ENCODE measurements at regions of chr6 and their contacts with region 1.

Region 1: DNA sequence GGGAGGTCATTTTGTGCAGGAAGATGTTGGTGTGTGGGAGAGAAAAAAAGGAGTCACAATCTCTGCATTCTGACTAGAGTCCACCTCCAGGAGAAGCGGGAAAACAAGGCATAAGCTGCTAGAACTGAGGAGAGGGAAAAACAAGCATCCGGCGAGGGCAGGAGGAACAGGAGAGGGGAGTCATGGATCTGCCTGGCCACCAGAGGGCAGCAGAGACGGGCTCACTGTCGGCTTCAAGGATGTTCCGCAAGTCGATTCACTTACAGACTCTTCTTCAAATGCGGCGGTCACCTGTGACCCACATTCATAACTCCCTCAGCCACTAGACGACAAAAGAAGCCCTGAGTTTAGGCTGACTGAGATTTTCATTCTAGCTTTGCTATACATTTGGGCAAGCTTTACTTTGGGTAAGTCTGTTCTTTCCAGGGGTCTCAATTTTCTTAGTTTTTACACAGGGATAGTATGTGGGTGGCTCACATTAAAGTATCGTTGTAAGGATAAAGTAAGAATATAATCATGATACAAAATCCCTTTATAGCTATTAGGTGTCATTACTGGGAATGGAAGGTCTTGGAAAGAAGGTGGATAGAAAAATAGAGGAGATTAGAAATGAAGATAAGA is 6.6 kb upstream of the BTNL2 start:
- DNase-seq: peak; percentile 74 to 90 (median 90)
- ATAC-seq: peak; percentile 81 to 83
- H3K4me3 ChIP-seq: no peak overlapping the region
- H3K27ac ChIP-seq: no peak overlapping the region
- H3K4me1 ChIP-seq: no peaks in the 10 kb centered on the region
- H3K27me3 ChIP-seq: peaks cover 3% of the 10 kb centered on the region

Region 2: GRCh38 chr6:32244946-32245398 is 168.6 kb before region 1 on chr6:
- intact Hi-C with region 1: loop called in 1 of 4 experiments (anchors 5 kb)
- DNase-seq: peak; percentile 87 to 93 (median 93)
- ATAC-seq: peak; percentile 87 to 88
- H3K4me3 ChIP-seq: no peak overlapping the region
- H3K27ac ChIP-seq: peak overlapping the region; percentile 62
- H3K4me1 ChIP-seq: no peaks in the 10 kb centered on the region
- H3K27me3 ChIP-seq: no peaks in the 10 kb centered on the region

Region 3: DNA sequence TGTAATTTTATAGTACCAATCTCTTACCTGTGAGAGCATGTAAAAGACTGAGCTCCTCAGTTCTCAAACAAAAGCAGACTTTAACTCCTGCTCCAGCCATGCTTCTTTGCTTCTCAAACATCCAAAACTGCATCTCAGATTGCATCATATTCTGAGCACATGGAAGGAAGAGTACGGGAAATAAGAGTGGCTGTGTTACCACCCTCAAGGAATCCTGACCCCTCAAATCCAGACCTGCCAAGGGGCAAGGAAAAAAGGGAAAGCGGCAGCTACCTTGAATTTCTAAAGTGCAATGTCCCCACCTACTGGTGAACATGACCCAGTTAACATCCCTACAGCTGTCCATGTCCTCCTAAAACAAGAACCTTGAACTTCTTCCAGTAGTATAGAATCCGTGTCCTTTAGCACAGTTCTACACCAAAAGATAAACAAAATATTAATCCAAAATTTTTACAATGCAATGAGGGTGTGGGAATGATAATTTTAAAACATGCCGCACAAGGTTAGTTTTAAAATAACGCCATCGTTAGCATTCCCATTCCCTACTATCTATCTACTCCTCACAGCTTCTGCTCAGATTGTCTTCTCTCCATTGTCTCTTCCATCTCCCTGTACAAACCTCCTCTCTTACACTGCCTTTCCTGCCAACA is 287.0 kb after region 1 on chr6:
- intact Hi-C with region 1: loop called in 3 of 4 experiments (anchors 5 to 10 kb)
- DNase-seq: no peak
- ATAC-seq: peak; percentile 74 to 75
- H3K4me3 ChIP-seq: no peak overlapping the region
- H3K27ac ChIP-seq: no peak overlapping the region
- H3K4me1 ChIP-seq: no peaks in the 10 kb centered on the region
- H3K27me3 ChIP-seq: no peaks in the 10 kb centered on the region

Region 4: DNA sequence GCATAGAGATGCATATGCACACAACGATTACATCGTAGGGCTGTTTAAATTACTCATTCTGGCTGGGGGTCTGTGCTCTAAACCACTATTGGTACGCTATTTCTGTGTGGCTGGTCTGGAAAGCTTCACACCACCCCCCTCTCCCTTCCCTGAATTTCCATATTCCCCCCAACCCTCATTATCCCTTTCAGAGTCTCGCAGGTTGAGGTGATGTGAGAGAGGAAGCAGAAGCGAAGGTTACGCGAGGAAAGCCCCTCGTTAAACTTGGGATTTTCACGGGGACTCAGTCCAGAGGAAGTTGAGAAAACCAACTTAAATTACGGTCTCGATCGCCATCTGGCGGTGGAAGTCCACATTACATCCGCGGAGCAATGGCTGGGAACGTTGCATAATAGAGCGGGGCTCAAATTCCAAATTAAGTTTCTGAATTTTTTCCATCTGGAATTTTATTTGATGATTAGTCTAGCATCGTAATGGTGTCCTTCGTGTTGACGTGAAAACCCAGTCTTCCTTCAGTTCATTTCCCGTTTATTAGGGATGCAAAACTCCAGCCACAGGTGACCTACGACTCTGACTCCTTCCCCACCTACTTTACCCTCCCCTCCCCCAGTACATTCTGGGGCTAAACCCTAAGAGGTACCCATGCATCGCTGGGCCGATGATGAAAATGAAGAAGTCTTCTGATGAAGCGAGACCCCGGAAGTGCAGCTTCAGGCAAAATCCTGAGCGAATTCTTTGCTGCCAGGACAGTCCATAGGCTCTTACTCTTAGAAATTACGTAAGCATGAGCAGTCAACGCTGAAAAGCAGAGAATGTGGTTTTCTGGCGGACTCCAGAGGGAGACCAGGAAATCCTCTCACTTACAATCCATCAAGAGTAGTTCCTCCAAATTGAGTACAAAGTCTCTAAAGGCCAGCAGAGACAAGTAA is 383.6 kb after region 1 on chr6:
- intact Hi-C with region 1: loop called (anchors 5 to 10 kb)
- DNase-seq: peak; percentile 67 to 90 (median 85)
- ATAC-seq: peak; percentile 80 to 84
- H3K4me3 ChIP-seq: peak overlapping the region; percentile 19
- H3K27ac ChIP-seq: no peak overlapping the region
- H3K4me1 ChIP-seq: no peaks in the 10 kb centered on the region
- H3K27me3 ChIP-seq: no peaks in the 10 kb centered on the region

Region 5: DNA sequence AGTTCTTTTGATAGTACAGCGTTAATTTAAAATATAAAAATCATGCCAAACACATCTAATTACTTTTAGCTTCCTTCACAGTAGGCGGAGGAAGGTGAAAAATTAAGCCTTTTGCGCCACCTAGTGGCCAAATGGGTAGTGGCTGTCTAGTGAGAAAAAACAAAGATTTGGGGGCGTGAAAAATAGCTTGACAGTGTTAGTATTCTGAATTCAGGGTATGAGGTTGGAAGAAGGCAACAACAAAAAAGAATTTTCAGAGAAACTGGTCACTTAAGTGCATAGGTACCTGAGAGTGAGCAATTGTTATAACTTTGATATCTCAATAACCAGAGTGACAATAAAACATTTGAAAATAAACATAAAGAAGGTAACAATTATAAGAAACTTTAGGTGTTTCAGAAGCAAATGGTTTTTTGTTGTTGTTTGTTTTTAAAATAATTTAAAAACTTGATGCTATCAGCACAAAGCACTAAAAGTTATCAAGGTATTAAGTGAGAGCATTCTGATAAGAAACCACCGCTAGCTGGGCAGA is 454.8 kb after region 1 on chr6:
- intact Hi-C with region 1: loop called in 1 of 4 experiments (anchors 5 kb)
- DNase-seq: peak; percentile 78 to 91 (median 82)
- ATAC-seq: peak; percentile 66 to 88
- H3K4me3 ChIP-seq: no peak overlapping the region
- H3K27ac ChIP-seq: no peak overlapping the region
- H3K4me1 ChIP-seq: no peaks in the 10 kb centered on the region
- H3K27me3 ChIP-seq: no peaks in the 10 kb centered on the region

Region 6: GRCh38 chr6:33161354-33162331 is 748.1 kb after region 1 on chr6:
- intact Hi-C with region 1: no loop called
- DNase-seq: peak; percentile 87 to 94 (median 93)
- ATAC-seq: peak; percentile 91 to 94
- H3K4me3 ChIP-seq: peak overlapping the region; percentile 41
- H3K27ac ChIP-seq: peak overlapping the region; percentile 9
- H3K4me1 ChIP-seq: no peaks in the 10 kb centered on the region
- H3K27me3 ChIP-seq: no peaks in the 10 kb centered on the region

Measured in right cardiac atrium (tissue), 5 donors.